ENCODE measurements at regions of chr11 and their contacts with region 1.

Region 1: DNA sequence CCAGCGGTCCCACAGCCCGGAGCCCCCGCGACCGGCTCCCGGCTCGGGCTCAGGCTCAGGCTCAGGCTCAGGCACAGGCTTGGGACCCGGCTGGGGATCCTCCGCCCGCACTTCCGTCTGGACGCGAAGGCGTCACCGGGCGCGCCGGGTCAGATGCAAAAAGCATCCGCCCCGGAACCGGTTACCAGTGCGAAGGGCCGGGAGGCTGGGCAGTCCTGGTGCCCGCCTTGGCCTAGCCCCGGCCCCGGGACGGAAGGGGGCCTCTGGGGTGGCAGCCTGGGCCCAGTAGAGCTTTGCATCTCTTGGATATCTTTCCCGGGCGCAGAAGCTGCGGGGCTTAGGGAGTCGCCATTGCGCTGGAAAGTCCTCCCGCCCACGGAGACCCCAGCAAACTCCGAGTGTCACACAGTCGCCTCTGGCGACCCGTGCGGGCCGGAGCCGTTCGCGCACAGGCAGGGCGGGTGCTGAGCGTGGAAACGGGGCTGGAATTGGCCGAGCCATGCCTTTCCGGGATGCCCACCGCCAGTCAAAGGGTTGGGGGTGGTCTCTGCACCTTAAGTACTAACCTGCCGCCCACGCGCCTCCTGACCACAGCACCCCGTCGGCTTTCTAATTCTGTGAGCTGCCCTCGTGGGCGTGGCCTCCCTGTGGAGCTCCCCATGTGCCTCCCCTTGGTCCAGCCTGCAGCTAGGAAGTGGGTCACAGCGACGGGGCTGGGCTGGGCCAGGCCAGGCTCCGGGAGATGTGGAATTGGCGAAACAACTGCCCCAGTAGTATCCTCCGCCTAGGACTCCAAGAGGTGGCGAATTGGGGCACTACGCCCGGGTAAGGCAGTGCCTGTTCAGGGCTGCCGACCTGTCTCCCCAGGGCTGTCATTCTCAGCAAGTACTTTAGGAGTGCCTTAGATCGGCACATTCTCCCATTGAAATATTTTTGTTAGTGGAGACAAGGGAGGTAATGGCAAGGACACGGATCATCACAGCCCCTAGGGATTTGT is at the start of gene TMEM9B:
- DNase-seq: peak; percentile 94
- H3K4me3 ChIP-seq: peak within 1 kb of the TSS; percentile 65 to 91 (median 78)
- H3K27ac ChIP-seq: peak within 1 kb of the TSS; percentile 92 to 98 (median 96)
- H3K4me1 ChIP-seq: peaks cover 0 to 37% (median 32%) of the 10 kb centered on the region in 4 donors
- H3K27me3 ChIP-seq: no peaks in the 10 kb centered on the region
- CTCF ChIP-seq: no peak
- EP300 ChIP-seq: peak in 2 of 4 donors; percentile 24 to 49
- POLR2A ChIP-seq: peak; percentile 94 to 95
- total RNA-seq, gene TMEM9B: 13.3 to 24.3 (median 20.1) TPM

Region 2: DNA sequence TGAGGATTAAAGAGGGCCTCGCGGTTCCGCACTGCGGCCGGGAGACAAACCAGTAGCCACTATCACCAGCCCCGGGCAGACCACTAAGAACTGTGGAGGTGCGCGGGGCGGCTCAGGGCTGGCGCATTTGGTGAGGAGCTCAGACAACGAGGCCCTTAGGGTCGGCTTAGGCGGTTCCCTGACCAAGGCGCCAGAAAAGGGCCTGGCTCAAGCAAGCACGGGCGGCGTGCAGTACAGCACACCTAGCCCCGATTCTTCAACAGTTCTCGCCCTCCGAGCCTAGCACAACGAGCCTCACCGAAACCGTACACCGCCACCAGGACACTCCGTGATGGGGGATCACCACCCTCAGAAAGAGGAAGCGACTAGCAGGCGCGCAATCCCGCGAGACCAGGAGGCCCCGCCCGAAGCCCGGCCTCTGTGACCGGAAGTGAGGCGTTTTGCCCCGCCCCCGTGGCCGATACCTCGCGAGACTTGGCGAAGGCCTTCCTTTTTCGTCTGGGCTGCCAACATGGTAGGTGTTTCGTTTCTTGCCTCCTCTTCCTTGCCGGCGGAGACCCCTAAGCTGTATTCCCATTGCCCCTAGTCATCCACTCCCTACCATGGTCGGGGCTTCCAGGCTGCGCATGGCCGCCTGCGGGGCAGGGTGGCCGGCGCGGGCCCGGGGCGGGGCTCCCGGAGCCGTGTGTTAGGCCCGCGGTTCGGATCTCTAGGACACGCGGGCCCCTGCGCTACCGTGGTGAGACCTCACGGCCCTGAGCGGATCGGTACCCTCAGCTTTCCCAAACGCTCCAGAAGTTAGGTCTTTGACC is 282.1 kb before region 1 on chr11 and contains the starts of genes RPL27A and TRIM66:
- intact Hi-C with region 1: loop called (anchors 5 kb)
- DNase-seq: peak; percentile 99
- H3K4me3 ChIP-seq: peak within 1 kb of the TSS; percentile 74 to 95 (median 92)
- H3K27ac ChIP-seq: peak within 1 kb of the TSS; percentile 93 to 99 (median 96)
- H3K4me1 ChIP-seq: peaks cover 0 to 29% (median 22%) of the 10 kb centered on the region in 4 donors
- H3K27me3 ChIP-seq: no peaks in the 10 kb centered on the region
- CTCF ChIP-seq: peak in 2 of 4 experiments; percentile 22 to 25
- EP300 ChIP-seq: peak in 2 of 4 donors; percentile 3 to 23
- POLR2A ChIP-seq: peak; percentile 99 to 100
- total RNA-seq, gene RPL27A: 1,472 to 2,262 (median 1,872) TPM
- total RNA-seq, gene TRIM66: 1.8 to 24.4 (median 10.2) TPM

Region 3: DNA sequence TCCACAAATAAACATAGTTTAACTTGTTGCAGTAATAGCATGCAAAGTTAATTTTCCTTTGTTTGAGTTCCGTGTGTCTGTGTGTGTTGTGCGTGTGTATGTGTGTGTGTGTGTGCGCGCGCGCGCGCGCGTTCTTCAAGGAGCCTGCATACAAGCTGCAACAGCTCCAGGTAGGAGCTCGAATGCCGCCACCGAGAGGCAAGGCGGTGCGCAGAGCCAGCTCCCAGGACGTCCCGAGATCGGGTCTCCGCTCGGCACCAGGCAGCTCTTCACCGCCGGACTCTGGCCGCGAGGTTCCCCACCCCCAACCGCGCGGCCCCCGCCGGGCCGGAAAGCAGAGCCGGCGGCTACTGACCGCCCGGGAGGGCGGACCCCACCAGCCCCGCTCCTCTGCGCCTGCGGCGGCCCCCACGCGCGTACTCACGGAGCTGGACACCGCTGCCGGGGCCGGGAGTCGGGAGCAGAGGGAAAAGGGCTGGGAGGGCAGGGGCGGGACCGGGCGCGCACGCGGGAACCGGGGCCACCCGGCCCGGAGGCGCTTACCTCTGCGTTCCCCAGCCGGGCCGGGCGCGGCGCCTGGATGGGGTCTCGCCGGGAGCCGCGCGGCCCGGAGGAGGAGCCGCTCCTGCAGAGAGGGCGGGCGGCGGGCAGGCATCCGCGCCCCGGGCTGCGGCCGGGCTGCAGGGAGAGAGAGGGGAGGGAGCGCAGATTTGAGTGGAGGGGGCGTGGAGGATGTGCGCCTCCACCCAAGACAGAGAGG is 94.0 kb before region 1 on chr11:
- intact Hi-C with region 1: loop called (anchors 5 kb)
- DNase-seq: peak; percentile 79
- H3K4me3 ChIP-seq: peak overlapping the region; percentile 81 to 91 (median 83)
- H3K27ac ChIP-seq: peak overlapping the region; percentile 88 to 94 (median 92)
- H3K4me1 ChIP-seq: peaks cover 0 to 61% (median 31%) of the 10 kb centered on the region in 4 donors
- H3K27me3 ChIP-seq: no peaks in the 10 kb centered on the region
- CTCF ChIP-seq: no peak
- EP300 ChIP-seq: no peak
- POLR2A ChIP-seq: no peak

Region 4: DNA sequence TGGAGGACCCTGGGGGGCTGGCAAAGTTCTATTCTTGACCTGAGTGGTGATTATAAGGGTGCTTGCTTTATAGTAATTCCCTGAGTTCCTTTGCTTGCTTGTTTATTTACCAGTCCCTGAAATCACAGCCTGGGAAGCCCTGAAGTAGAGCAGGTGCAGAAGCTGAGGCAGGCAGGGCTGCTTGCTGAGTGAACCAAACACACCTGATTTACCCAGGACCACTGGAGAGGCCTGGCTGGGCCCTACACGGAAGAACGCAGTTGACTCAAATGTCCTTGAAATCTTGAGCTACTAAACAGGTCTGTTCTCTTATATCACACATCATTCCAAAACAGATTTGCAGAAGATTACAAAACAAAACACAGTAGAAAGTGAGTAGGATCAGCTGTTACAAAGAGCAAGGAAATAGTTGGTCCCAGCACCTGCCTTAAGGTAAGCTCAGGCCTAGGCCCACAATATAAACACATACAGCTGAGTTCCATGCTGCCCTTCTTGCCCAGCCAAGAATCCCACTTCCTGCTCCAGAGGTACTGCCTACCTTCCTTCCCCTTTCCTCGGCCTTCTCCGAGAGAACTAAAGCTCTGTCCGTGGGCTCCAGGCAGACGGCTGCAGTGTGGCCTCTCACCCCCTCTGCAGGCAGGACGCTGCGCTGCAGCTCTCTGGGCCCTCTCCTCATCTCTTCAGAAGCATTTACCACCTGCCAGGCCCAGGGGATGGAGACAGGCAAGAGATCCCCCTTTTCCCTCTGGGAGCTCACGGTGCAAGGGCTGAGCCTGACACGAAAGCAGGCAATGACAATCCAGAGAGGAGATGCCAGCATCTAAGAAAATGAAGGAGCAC is 172.9 kb after region 1 on chr11:
- intact Hi-C with region 1: loop called (anchors 5 kb)
- DNase-seq: peak; percentile 89
- H3K4me3 ChIP-seq: no peak overlapping the region
- H3K27ac ChIP-seq: peak overlapping the region in 2 of 4 donors; percentile 26 to 35
- H3K4me1 ChIP-seq: peaks cover 0 to 6% (median 1%) of the 10 kb centered on the region in 4 donors
- H3K27me3 ChIP-seq: no peaks in the 10 kb centered on the region
- CTCF ChIP-seq: peak; percentile 85 to 98 (median 94)
- EP300 ChIP-seq: no peak
- POLR2A ChIP-seq: no peak

Measured in sigmoid colon (tissue), 7 donors.